ENCODE measurements at regions of chr22 and their contacts with region 1.

Region 1: DNA sequence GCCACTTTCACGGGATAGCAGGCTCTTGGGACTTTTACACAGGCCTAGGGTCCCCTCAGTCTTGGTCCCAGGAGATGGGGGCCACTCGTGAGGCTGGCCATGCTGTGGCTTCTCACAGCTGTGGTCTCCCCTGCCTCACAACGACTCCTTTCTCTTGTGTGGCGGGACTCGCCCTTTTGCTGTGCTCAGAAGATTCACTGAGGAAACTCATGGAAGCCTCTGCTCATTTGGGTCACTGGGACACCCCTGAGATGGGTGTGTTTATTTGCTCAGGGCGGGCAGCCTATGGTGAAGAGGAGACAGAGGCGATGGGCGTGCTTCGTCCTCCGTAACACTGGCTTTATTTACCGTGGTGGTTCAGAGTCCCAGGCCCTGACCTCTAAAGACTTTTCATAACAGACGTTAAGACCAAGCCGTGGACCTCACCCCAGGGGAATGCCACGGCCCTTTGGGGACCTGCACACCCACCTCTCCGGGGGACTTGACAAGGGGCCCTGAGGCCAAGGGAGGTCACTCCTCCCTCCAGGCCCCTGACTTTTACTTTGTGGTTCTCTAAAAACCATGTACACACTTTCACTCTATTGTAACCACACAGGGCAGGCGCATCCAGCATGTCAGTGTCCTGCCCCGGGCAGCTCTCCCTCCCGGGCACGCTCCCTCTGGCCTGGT is 15.5 kb downstream of the TEF start:
- DNase-seq: no peak
- H3K4me3 ChIP-seq: no peak overlapping the region
- H3K27ac ChIP-seq: no peak overlapping the region
- H3K4me1 ChIP-seq: peaks cover 7 to 12% of the 10 kb centered on the region in 2 donors
- H3K27me3 ChIP-seq: no peaks in the 10 kb centered on the region
- CTCF ChIP-seq: no peak
- POLR2A ChIP-seq: no peak

Region 2: GRCh38 chr22:41301105-41302020 is 95.9 kb before region 1 on chr22 and contains the start of gene ZC3H7B:
- intact Hi-C with region 1: no loop called
- DNase-seq: peak; percentile 87 to 92
- H3K4me3 ChIP-seq: peak within 1 kb of the TSS; percentile 36 to 79 (median 63)
- H3K27ac ChIP-seq: peak within 1 kb of the TSS; percentile 90 to 97 (median 93)
- H3K4me1 ChIP-seq: peaks cover 18 to 30% of the 10 kb centered on the region in 2 donors
- H3K27me3 ChIP-seq: no peaks in the 10 kb centered on the region
- CTCF ChIP-seq: peak; percentile 14 to 62 (median 37)
- POLR2A ChIP-seq: peak in 1 of 2 donors; percentile 84
- total RNA-seq, gene ZC3H7B: 77.7 to 100 (median 88.7) TPM

Region 3: GRCh38 chr22:41526837-41527799 is 129.8 kb after region 1 on chr22:
- intact Hi-C with region 1: loop called (anchors 5 kb)
- DNase-seq: peak; percentile 30 to 36
- H3K4me3 ChIP-seq: no peak overlapping the region
- H3K27ac ChIP-seq: peak overlapping the region in 1 of 3 donors; percentile 33
- H3K4me1 ChIP-seq: peaks cover 3 to 21% of the 10 kb centered on the region in 2 donors
- H3K27me3 ChIP-seq: no peaks in the 10 kb centered on the region
- CTCF ChIP-seq: peak; percentile 49 to 66 (median 54)
- POLR2A ChIP-seq: no peak

Region 4: DNA sequence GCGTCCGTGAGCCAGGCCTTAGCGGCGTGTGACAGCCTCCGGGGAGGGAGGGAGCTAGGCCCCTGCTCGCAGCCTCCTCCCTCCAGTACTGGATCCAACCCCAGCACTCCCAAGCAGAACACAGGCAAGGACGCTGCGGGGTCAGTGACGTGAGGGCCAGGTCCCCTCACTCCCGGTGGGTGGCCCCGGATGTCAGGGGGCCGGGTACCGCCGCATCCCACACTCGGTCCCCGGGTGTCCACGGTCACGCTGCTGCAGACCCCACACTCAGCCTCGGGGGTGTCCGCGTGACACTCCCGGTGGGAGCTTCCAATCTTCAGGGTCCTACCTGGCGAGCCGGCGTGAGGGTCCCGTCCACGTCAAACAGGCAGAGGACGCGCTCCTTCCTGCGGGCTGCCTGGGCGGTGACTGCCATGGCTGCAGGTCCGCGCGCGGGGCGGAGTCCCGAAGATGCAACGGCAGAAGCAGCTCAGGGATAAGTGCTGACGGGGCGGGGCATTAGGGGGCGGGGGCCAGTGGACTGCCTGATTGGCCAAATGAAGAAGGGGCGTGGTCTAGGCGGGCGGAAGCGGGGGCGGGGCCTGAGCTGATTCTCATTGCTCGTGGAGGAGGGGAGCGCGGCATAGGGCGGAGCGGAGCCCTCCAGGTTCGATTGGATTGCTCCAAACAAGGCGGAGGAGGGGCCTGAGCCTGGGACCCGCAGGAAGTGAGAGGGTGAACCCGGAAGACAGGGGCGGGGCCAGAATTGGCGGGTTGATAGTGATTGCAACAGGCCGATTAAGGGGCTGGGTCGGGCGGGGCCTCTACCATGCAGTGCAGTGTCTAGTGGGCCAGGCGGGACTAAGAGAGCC is 192.3 kb after region 1 on chr22 and contains the start of gene PMM1:
- intact Hi-C with region 1: loop called (anchors 10 kb)
- DNase-seq: peak; percentile 100
- H3K4me3 ChIP-seq: peak within 1 kb of the TSS; percentile 62 to 80 (median 66)
- H3K27ac ChIP-seq: peak within 1 kb of the TSS in 2 of 3 donors; percentile 29 to 38
- H3K4me1 ChIP-seq: peaks cover 5 to 10% of the 10 kb centered on the region in 2 donors
- H3K27me3 ChIP-seq: no peaks in the 10 kb centered on the region
- CTCF ChIP-seq: no peak
- POLR2A ChIP-seq: peak in 1 of 2 donors; percentile 71
- total RNA-seq, gene PMM1: 17.7 to 26.1 (median 23.8) TPM

Measured in thyroid gland (tissue), 4 donors.